ENCODE measurements at regions of chr2 and their contacts with region 1.

Region 1: GRCh38 chr2:65300761-65301711 is 73.4 kb downstream of the ACTR2 start:
- DNase-seq: peak; percentile 80
- ATAC-seq: peak; percentile 78
- H3K4me3 ChIP-seq: peak overlapping the region; percentile 46; the same call in 1 of the 2 replicates
- H3K27ac ChIP-seq: peak overlapping the region; percentile 92
- H3K4me1 ChIP-seq: peaks cover 39% of the 10 kb centered on the region
- H3K27me3 ChIP-seq: no peaks in the 10 kb centered on the region
- CTCF ChIP-seq: no peak

Region 2: DNA sequence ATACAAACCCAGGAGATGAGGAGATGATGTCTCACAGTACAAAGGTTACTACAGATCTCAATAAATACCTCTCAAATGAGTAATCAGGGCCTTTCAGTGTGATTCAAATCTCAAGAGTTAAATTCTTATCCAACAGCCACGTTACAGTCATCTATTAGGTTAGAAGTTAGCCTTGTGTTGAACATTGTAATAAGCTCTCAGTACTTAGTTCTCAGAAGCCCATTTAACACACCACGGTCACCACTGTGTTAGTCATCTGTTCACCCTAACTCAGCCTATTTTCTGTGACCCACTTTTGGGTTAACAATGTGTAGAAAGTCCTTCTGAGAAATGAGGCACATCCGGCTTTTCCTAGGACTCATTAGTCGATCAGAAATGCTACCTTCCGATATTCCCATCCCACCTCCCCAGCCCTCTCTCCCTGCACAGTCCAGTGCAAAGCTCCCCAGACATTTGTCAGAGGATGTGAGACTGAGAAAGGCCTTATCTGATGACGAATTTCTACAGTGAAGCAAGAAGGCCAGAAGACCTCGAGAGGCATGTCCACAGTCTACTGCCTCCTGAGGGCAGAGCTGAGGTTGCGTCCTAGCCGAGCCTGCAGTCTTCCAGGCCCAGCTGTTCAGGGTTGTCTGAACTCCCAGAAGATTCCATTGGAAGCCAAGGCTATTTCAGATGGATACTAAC is 19.1 kb after region 1 on chr2:
- CTCF ChIA-PET with region 1: no interaction called
- POLR2A ChIA-PET with region 1: interaction called, 4 read pairs
- intact Hi-C with region 1: loop called (anchors 2 kb)
- DNase-seq: peak; percentile 97
- ATAC-seq: peak; percentile 76
- H3K4me3 ChIP-seq: peak overlapping the region; percentile 33; the same call in 1 of the 2 replicates
- H3K27ac ChIP-seq: peak overlapping the region; percentile 93
- H3K4me1 ChIP-seq: peaks cover 75% of the 10 kb centered on the region
- H3K27me3 ChIP-seq: no peaks in the 10 kb centered on the region
- CTCF ChIP-seq: peak; percentile 74

Region 3: GRCh38 chr2:65483763-65484162 is 182.7 kb after region 1 on chr2:
- CTCF ChIA-PET with region 1: no interaction called
- POLR2A ChIA-PET with region 1: no interaction called
- intact Hi-C with region 1: no loop called
- DNase-seq: no peak
- ATAC-seq: no peak
- H3K4me3 ChIP-seq: no peak overlapping the region
- H3K27ac ChIP-seq: no peak overlapping the region
- H3K4me1 ChIP-seq: no peaks in the 10 kb centered on the region
- H3K27me3 ChIP-seq: no peaks in the 10 kb centered on the region
- CTCF ChIP-seq: no peak